A549 (cell line): ENCODE measurements at regions of chr17 and their contacts with region 1.

Region 1: DNA sequence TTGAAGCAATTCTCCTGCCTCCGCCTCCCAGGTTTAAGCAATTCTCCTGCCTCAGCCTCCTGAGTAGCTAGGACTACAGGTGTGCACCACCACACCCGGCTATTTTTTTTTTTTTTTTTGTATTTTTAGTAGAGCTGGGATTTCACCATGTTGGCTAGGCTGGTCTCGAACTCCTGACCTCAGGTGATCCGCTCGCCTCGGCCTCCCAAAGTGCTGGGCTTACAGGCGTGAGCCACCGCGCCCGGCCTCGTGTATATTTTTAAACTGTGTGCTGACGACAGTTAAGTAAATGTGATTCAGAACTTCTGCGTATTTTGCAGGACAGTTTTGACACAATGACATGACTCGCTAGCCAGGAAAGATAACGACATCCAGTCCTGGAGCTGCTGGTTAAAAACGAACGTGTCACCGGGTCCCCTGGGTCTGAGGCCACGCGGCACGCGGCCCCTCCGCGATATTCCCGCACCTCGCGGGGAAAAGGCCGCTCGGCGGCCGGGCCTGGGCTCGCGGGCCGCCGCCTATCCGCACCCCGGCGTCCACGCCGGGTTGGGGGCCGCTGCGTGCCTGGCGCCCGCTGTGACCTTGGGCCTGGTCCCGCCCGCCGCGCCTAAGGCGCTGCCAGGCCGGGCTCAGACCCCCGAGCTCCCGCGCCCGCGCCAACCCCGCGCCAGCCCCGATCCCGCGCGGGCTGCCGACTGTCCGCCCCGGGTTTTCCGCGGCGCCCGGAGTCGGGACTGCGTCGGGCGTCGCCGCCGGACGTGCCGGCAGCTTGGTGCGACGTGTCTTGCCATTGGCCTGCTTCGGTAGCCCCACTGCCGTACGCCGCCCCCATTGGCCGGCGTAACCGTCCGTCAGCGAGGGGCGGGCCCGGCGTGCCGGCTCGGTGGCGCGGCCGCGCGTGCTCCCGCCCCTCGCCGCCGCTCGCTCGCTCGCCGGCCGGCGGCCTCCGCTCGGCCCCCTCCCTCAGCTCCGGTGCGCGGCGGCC is at the start of gene FOXK2:
- DNase-seq: peak; percentile 97 to 99
- ATAC-seq: peak; percentile 98 to 99
- H3K4me3 ChIP-seq: peak within 1 kb of the TSS; percentile 93
- H3K27ac ChIP-seq: peak within 1 kb of the TSS; percentile 90 to 96
- H3K4me1 ChIP-seq: peaks cover 12% of the 10 kb centered on the region
- CTCF ChIP-seq: no peak
- EP300 ChIP-seq: no peak
- POLR2A ChIP-seq: peak; percentile 39
- RAD21 ChIP-seq: no peak
- polyA plus RNA-seq, gene FOXK2: 34.8 and 35.9 TPM in 2 replicates

Region 2: GRCh38 chr17:82380860-82381702 is 138.0 kb before region 1 on chr17:
- CTCF ChIA-PET with region 1: no interaction called
- POLR2A ChIA-PET with region 1: no interaction called
- DNase-seq: no peak
- ATAC-seq: no peak
- H3K4me3 ChIP-seq: no peak overlapping the region
- H3K27ac ChIP-seq: peak overlapping the region in 1 of 2 experiments; percentile 3; a peak in 1 of 6 replicates
- H3K4me1 ChIP-seq: peaks cover 24% of the 10 kb centered on the region
- CTCF ChIP-seq: no peak
- EP300 ChIP-seq: no peak
- POLR2A ChIP-seq: no peak
- RAD21 ChIP-seq: no peak

Region 3: DNA sequence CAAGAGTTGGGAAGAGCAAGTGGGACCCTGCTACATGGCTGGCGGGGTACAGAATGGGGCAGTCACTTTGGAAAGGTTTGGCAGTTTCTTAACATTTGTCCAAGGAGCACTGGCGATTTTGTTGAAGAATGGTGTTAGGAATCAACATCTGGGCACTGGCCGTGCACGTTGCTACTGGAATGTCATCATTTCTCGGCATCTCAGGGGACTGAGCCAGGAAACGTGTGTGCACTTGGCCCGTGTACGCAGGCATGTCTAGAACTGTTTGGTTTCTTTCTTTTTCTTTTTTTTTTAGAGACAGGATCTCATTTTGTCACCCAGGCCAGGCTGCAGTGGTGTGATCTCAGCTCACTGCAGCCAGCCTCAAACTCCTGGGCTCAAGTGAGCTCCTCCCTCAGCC is 16.9 kb before region 1 on chr17:
- CTCF ChIA-PET with region 1: interaction called, 7 read pairs
- POLR2A ChIA-PET with region 1: interaction called, 10 read pairs
- DNase-seq: no peak
- ATAC-seq: no peak
- H3K4me3 ChIP-seq: no peak overlapping the region
- H3K27ac ChIP-seq: no peak overlapping the region
- H3K4me1 ChIP-seq: peaks cover 5% of the 10 kb centered on the region; the same call in 2 of the 3 replicates
- CTCF ChIP-seq: no peak
- EP300 ChIP-seq: no peak
- POLR2A ChIP-seq: no peak
- RAD21 ChIP-seq: no peak